PC-9 (cell line): ENCODE measurements at regions of chr10 and their contacts with region 1.

Region 1: DNA sequence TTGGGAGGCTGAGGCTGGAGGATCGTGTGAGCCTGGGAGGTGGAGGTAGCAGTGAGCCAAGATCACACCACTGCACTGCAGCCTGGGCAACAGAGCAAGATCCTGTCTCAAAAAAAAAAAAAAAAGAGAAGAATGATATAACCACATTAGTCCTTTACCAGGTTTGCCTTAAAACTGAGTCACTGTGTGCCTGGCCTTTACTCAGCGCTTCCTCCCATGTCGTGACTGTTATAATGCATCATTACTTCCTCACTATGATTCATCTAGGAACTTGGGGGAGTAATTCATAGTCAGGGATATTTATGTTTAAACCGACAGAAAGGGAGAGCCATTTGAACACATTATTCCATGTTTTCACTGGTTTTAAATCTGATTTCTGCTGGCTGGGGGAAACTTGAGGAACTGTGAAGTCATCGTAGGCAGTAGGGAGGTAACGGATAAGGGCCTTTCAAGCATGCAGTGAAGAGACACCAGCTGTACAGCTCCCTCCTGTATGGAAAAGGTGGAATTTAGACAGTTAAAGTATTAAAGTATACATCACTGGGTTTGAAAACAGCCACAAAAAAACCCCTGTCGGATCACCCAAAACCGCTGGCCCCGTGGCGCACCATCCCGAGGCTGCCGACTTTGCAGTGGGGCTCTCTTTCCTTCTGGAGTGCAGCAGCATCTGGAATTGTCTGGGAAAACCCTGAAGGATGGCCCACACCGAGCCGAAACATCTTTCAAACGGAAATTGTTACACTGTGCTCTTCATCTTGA is 119.8 kb downstream of the NKX6-2 start:
- DNase-seq: peak in 1 of 2 experiments; percentile 67
- H3K4me3 ChIP-seq: no peak overlapping the region
- H3K27ac ChIP-seq: peak overlapping the region; percentile 71
- H3K4me1 ChIP-seq: peaks cover 15% of the 10 kb centered on the region
- H3K27me3 ChIP-seq: no peaks in the 10 kb centered on the region
- CTCF ChIP-seq: no peak

Region 2: GRCh38 chr10:132478341-132479023 is 187.6 kb before region 1 on chr10:
- CTCF ChIA-PET with region 1: interaction called, 14 read pairs
- POLR2A ChIA-PET with region 1: no interaction called
- intact Hi-C with region 1: no loop called
- DNase-seq: no peak
- H3K4me3 ChIP-seq: no peak overlapping the region
- H3K27ac ChIP-seq: no peak overlapping the region
- H3K4me1 ChIP-seq: no peaks in the 10 kb centered on the region
- H3K27me3 ChIP-seq: peaks cover 14% of the 10 kb centered on the region
- CTCF ChIP-seq: no peak

Region 3: GRCh38 chr10:132571650-132572535 is 94.2 kb before region 1 on chr10:
- CTCF ChIA-PET with region 1: no interaction called
- POLR2A ChIA-PET with region 1: no interaction called
- intact Hi-C with region 1: no loop called
- DNase-seq: peak; percentile 85 to 90
- H3K4me3 ChIP-seq: no peak overlapping the region; the same call in 1 of the 2 replicates
- H3K27ac ChIP-seq: peak overlapping the region; percentile 55
- H3K4me1 ChIP-seq: peaks cover 55% of the 10 kb centered on the region
- H3K27me3 ChIP-seq: no peaks in the 10 kb centered on the region
- CTCF ChIP-seq: no peak

Region 4: GRCh38 chr10:132627666-132628531 is 38.2 kb before region 1 on chr10:
- CTCF ChIA-PET with region 1: no interaction called
- POLR2A ChIA-PET with region 1: no interaction called
- intact Hi-C with region 1: no loop called
- DNase-seq: no peak
- H3K4me3 ChIP-seq: no peak overlapping the region
- H3K27ac ChIP-seq: no peak overlapping the region
- H3K4me1 ChIP-seq: no peaks in the 10 kb centered on the region
- H3K27me3 ChIP-seq: no peaks in the 10 kb centered on the region
- CTCF ChIP-seq: no peak

Region 5: GRCh38 chr10:132684164-132684891 is 18.2 kb after region 1 on chr10:
- CTCF ChIA-PET with region 1: no interaction called
- POLR2A ChIA-PET with region 1: interaction called, 6 read pairs
- intact Hi-C with region 1: loop called (anchors 2 kb)
- DNase-seq: peak in 1 of 2 experiments; percentile 48
- H3K4me3 ChIP-seq: peak overlapping the region; percentile 44
- H3K27ac ChIP-seq: peak overlapping the region; percentile 98
- H3K4me1 ChIP-seq: peaks cover 32% of the 10 kb centered on the region
- H3K27me3 ChIP-seq: no peaks in the 10 kb centered on the region
- CTCF ChIP-seq: no peak

Region 6: GRCh38 chr10:132746801-132747625 is 80.9 kb after region 1 on chr10:
- CTCF ChIA-PET with region 1: no interaction called
- POLR2A ChIA-PET with region 1: no interaction called
- intact Hi-C with region 1: no loop called
- DNase-seq: no peak
- H3K4me3 ChIP-seq: no peak overlapping the region
- H3K27ac ChIP-seq: no peak overlapping the region
- H3K4me1 ChIP-seq: no peaks in the 10 kb centered on the region
- H3K27me3 ChIP-seq: no peaks in the 10 kb centered on the region
- CTCF ChIP-seq: no peak